AG04450 (cell line): ENCODE measurements at regions of chr3 and their contacts with region 1.

Region 1: GRCh38 chr3:149717391-149718056 is 34.8 kb downstream of the COMMD2 start:
- DNase-seq: peak; percentile 45
- H3K4me3 ChIP-seq: no peak overlapping the region
- H3K27ac ChIP-seq: no peak overlapping the region
- H3K27me3 ChIP-seq: no peaks in the 10 kb centered on the region
- CTCF ChIP-seq: peak; percentile 80

Region 2: DNA sequence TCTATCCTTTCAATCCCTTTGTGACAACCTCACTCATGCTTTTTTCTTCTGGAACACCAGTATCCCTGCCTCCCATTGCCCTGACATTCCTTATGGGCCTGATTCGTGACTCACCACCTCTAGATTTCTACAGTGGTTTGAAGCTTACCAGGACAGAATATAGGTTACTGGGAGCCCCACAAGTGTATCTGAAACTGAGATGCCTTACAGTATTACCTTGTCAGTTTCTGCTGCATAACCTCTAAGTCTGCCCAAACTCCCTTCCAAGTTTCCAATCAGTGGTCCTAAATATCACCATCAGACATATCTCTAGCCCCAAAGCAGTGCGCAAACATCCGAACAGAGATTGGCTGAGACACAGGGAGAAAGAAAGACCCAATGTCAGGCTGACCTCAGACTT is 884.3 kb before region 1 on chr3:
- CTCF ChIA-PET with region 1: no interaction called
- POLR2A ChIA-PET with region 1: no interaction called
- DNase-seq: no peak
- H3K4me3 ChIP-seq: no peak overlapping the region
- H3K27ac ChIP-seq: no peak overlapping the region
- H3K27me3 ChIP-seq: no peaks in the 10 kb centered on the region
- CTCF ChIP-seq: no peak

Region 3: DNA sequence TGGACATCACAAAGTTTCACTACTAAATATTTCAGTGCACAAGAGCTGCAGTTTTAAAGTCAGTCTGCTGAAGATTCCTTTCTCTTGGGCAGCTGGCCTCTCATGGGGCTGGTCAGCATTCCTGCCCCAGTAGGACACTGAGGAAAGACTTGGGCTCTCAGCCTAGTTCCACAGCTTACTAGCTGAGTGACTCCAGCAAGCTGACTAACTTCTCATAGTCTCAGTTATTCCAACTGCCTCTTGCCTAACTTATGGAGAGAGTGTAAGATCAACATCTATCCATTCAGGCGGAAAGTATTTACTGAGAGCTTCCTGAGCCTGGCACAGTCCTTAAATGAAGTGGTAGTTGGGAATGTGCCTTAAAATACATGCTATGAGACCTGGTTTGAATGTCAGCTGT is 216.0 kb before region 1 on chr3:
- CTCF ChIA-PET with region 1: interaction called, 14 read pairs
- POLR2A ChIA-PET with region 1: no interaction called
- DNase-seq: peak; percentile 46
- H3K4me3 ChIP-seq: no peak overlapping the region
- H3K27ac ChIP-seq: no peak overlapping the region
- H3K27me3 ChIP-seq: no peaks in the 10 kb centered on the region
- CTCF ChIP-seq: no peak

Region 4: DNA sequence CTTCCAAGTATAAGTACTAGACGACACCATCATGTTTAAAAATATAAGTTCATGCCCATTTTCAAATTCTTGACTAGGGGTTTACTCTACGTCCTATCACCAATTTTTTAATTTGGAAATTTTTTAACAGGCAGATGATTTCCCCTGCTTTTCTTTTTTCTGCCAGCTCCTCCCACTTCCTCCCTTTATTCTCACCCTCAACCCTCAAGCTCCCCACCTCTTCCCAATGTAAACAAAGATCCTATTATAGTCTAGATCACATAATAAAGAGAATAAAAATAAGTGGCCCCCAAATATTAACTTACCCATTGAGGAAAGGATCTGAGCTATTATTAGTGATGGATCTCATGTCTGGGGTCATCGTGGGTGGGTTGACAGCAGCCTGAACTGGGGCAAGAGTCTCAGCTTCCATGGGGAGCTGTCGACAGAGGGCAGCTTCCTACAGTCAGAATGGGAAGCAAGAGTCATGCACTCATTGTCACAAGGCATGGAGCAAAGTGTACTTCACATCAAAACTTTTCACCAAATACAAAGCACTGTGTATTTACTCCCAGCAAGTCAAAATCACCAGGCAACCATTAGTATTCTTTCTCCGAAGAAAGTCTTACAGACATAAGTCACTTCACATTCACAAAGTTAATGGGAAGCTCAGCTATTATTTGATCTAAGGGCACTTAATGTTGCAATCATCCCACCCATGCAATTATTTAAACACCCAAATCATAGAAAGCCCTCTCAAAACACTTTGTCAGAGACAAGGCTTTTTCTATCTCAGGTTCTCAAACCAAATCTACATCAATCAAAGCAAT is 189.8 kb before region 1 on chr3:
- CTCF ChIA-PET with region 1: interaction called, 63 read pairs
- POLR2A ChIA-PET with region 1: no interaction called
- DNase-seq: no peak
- H3K4me3 ChIP-seq: no peak overlapping the region
- H3K27ac ChIP-seq: peak overlapping the region; percentile 41
- H3K27me3 ChIP-seq: no peaks in the 10 kb centered on the region
- CTCF ChIP-seq: peak; percentile 25; the same call in 1 of the 2 replicates

Region 5: DNA sequence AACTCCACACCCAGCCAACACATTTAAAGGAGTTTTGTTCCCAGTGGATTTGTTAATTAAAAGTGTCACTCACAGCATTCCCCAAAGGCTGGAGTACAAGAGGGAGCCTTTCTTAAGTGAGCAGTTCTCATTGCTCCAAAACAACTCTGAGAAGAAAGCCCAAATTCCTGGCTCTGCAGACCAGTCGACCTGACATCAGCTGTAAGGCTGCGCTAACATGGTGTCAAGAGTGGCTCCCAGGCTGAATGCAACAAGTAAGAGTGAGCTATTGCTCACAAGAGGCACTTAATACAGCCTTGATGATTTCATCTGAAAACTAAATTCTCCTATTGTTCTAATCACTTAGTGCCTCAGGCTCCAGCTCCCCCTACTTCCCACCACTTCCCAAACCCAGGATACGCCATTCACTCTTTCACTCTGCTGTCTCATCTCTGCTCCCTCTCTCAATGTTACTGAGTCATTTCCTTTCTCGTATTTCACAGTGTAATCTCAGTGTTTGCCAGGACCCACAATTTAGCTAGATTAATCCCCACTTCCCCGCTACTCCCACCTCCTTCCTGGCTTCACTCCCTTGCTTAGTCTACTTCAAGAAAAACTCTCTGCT is 141.5 kb before region 1 on chr3:
- CTCF ChIA-PET with region 1: interaction called, 21 read pairs
- POLR2A ChIA-PET with region 1: no interaction called
- DNase-seq: peak; percentile 90
- H3K4me3 ChIP-seq: peak overlapping the region; percentile 34
- H3K27ac ChIP-seq: peak overlapping the region; percentile 99
- H3K27me3 ChIP-seq: no peaks in the 10 kb centered on the region
- CTCF ChIP-seq: no peak

Region 6: DNA sequence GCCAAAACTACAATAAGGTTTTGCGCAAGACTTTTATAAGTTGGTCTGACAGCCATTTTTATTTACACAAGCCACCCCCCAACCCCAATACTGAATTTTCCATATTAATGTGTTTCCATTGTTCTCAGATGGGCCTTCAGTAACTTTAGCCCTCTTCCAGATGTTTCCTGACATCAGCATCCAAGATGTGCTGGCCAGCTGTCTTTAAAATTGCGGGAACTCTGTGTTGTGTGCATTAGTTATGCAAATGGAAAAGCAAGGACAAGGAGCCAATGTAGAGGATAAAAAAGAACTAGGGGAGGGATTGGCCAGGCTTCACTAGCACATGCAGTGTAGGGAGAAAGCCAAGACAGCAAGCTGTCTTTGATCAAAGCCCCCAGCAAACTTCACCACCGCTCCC is 10.6 kb before region 1 on chr3:
- CTCF ChIA-PET with region 1: interaction called, 24 read pairs
- POLR2A ChIA-PET with region 1: no interaction called
- DNase-seq: peak; percentile 36
- H3K4me3 ChIP-seq: no peak overlapping the region
- H3K27ac ChIP-seq: no peak overlapping the region
- H3K27me3 ChIP-seq: no peaks in the 10 kb centered on the region
- CTCF ChIP-seq: no peak